Heart right ventricle (tissue), 16 donors: ENCODE measurements at regions of chr22 and their contacts with region 1.

Region 1: DNA sequence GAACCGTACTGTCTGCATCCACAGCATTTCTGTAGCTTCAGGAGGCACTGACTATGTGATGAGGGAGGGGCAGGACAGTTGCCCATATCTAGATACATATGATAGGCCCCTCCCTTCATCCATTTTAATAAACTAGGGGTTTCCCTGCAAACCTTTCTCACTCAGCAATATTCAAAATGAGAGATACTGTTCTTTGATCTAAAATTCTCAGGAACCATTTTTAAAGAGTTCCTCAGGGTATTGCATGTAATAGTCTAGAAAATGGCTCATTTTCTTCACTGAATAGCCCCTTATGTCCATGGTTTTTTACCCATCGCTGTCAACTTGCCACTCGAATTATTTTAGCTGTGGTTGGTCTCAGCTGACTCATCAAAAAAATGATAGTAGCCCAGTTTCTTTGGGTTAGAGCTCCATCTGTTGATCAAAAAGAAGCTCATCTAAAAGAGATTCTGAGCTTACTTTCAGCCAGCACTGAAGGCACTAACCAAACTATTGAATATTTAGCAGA is 37.0 kb upstream of the DNAJB7 start:
- DNase-seq: no peak
- ATAC-seq: peak in 2 of 8 donors; percentile 43 to 46
- H3K4me3 ChIP-seq: no peak overlapping the region
- H3K27ac ChIP-seq: no peak overlapping the region
- H3K4me1 ChIP-seq: peaks cover 0 to 28% (median 2%) of the 10 kb centered on the region in 9 donors
- H3K27me3 ChIP-seq: no peaks in the 10 kb centered on the region
- CTCF ChIP-seq: peak in 6 of 9 donors; percentile 39 to 65 (median 56)

Region 2: DNA sequence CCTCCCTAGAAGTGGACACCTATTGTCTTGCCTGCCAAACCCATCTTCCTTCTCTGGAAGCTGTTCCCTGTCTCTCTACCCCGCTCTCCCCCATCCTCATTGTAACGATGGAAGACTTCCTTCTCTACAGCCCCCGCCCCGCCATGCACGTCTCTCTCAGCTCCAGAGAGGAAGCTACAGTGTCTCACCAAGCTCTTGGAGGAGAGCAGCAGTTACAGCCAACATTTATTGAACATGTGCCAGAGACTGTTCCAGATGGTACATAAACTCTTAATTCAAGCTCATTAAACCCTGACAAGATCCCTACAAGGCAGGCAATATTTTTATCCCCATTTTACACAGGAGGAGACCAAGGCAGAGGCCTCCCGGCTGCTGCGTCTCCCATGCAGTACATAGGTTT is 204.5 kb before region 1 on chr22:
- intact Hi-C with region 1: loop called in 2 of 10 experiments (anchors 10 kb)
- DNase-seq: no peak
- ATAC-seq: peak in 3 of 8 donors; percentile 35 to 42 (median 41)
- H3K4me3 ChIP-seq: no peak overlapping the region
- H3K27ac ChIP-seq: no peak overlapping the region
- H3K4me1 ChIP-seq: peaks cover 0 to 7% (median 0%) of the 10 kb centered on the region in 9 donors
- H3K27me3 ChIP-seq: peaks cover 0 to 3% (median 0%) of the 10 kb centered on the region in 7 donors
- CTCF ChIP-seq: no peak

Region 3: GRCh38 chr22:40982482-40983385 is 83.8 kb after region 1 on chr22:
- intact Hi-C with region 1: no loop called
- DNase-seq: peak in 1 of 2 donors; percentile 17
- ATAC-seq: peak; percentile 29 to 92 (median 65)
- H3K4me3 ChIP-seq: no peak overlapping the region
- H3K27ac ChIP-seq: peak overlapping the region in 6 of 10 donors; percentile 9 to 60 (median 29)
- H3K4me1 ChIP-seq: peaks cover 0 to 13% (median 6%) of the 10 kb centered on the region in 9 donors
- H3K27me3 ChIP-seq: no peaks in the 10 kb centered on the region
- CTCF ChIP-seq: no peak

Region 4: GRCh38 chr22:41184679-41185078 is 285.8 kb after region 1 on chr22:
- intact Hi-C with region 1: no loop called
- DNase-seq: no peak
- ATAC-seq: no peak
- H3K4me3 ChIP-seq: no peak overlapping the region
- H3K27ac ChIP-seq: no peak overlapping the region
- H3K4me1 ChIP-seq: peaks cover 0 to 14% (median 0%) of the 10 kb centered on the region in 9 donors
- H3K27me3 ChIP-seq: no peaks in the 10 kb centered on the region
- CTCF ChIP-seq: no peak